IMR-90 (cell line): ENCODE measurements at regions of chr9 and their contacts with region 1.

Region 1: GRCh38 chr9:134492281-134492691 is 149.3 kb upstream of the COL5A1 start:
- DNase-seq: peak; percentile 91
- ATAC-seq: peak; percentile 88
- H3K4me3 ChIP-seq: no peak overlapping the region
- H3K27ac ChIP-seq: peak overlapping the region; percentile 41; the same call in 1 of the 2 replicates
- H3K4me1 ChIP-seq: peaks cover 22% of the 10 kb centered on the region
- H3K27me3 ChIP-seq: peaks cover 5% of the 10 kb centered on the region
- CTCF ChIP-seq: no peak
- POLR2A ChIP-seq: no peak
- RAD21 ChIP-seq: no peak; the same call in 1 of the 2 replicates

Region 2: DNA sequence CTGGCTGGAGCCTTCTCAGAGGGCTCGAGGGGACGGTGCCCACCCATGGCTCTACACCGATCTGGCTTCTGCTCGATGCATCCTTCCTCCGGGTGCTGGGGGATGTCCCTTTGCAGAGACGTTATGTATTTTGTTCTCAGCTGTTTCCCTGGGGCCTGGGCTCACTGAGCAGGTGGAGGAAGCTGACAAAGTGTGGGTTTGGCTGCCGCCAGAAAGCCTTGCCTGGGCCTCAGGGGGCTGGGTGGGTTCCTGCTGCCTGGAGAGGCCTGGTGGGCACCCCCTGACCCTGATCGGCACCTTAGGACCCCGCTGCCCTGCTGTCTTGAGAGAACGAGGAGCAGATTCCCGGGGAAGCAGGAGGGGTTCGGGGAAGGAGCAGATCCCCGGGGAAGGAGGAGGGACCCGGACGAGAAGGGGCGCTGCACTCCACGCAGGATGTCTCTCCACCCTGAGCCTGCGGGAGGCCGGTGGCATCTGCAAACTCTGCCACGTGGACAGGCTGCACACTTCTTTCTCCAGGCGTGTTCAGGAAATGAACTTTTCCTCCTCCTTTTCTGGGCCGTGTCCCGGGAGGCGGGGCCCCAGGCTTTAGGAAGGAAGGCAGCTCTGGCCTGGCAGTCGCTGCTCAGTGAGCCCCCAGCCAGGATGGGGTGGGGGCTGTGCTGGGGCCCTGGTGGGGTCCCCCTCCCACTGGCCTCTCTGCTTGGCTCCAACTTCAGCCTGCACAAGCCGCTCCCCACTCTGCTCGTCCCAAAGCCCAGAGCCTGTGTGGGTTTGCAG is 17.1 kb before region 1 on chr9:
- CTCF ChIA-PET with region 1: interaction called, 3 read pairs
- POLR2A ChIA-PET with region 1: no interaction called
- dilution Hi-C with region 1: no loop called
- in situ Hi-C with region 1: no loop called
- intact Hi-C with region 1: loop called (anchors 1 kb)
- DNase-seq: peak; percentile 81
- ATAC-seq: peak; percentile 90
- H3K4me3 ChIP-seq: no peak overlapping the region
- H3K27ac ChIP-seq: peak overlapping the region; percentile 6
- H3K4me1 ChIP-seq: peaks cover 22% of the 10 kb centered on the region
- H3K27me3 ChIP-seq: no peaks in the 10 kb centered on the region
- CTCF ChIP-seq: peak; percentile 26; the same call in 1 of the 2 replicates
- POLR2A ChIP-seq: 0 out of 2 replicates have a peak, but pooled peaks have one; percentile 30
- RAD21 ChIP-seq: peak; percentile 37; the same call in 1 of the 2 replicates

Region 3: GRCh38 chr9:135183528-135184180 is 691.4 kb after region 1 on chr9:
- CTCF ChIA-PET with region 1: no interaction called
- POLR2A ChIA-PET with region 1: no interaction called
- dilution Hi-C with region 1: no loop called
- in situ Hi-C with region 1: no loop called
- intact Hi-C with region 1: no loop called
- DNase-seq: no peak
- ATAC-seq: no peak
- H3K4me3 ChIP-seq: no peak overlapping the region
- H3K27ac ChIP-seq: no peak overlapping the region
- H3K4me1 ChIP-seq: no peaks in the 10 kb centered on the region
- H3K27me3 ChIP-seq: peaks cover 2% of the 10 kb centered on the region; the same call in 1 of the 2 replicates
- CTCF ChIP-seq: no peak
- POLR2A ChIP-seq: no peak
- RAD21 ChIP-seq: no peak